Endothelial cell of umbilical vein (primary cell): ENCODE measurements at regions of chr19 and their contacts with region 1.

Region 1: DNA sequence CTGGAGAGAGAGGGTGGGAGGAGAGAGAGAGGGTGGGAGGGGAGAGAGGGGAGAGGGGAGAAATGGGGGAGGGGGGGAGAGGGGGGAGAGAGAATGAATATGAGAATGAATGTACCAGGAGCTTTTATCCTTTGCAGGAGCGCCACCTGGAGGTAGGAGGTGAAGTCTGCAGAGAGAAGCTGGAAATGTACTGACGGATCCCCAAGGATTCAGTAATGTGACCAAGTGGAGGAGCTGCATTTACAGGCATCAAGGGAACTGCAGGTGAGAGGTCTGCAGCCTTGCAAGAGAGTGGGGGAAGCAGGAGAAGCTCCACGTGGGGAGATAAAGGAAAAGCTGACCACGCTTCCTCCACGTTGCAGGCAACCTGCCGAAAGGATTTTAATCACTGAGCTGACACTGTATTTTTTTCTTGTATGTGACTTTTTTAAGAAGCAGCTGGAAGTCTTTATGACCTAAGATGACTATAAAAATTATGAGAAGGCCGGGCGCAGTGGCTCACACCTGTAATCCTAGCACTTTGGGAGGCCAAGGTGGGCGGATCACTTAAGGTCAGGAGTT is 33.7 kb downstream of the VSTM1 start:
- DNase-seq: peak; percentile 67
- H3K4me3 ChIP-seq: no peak overlapping the region
- H3K27ac ChIP-seq: no peak overlapping the region
- H3K4me1 ChIP-seq: peaks cover 4% of the 10 kb centered on the region
- H3K27me3 ChIP-seq: no peaks in the 10 kb centered on the region
- CTCF ChIP-seq: peak; percentile 61 to 72
- POLR2A ChIP-seq: no peak

Region 2: DNA sequence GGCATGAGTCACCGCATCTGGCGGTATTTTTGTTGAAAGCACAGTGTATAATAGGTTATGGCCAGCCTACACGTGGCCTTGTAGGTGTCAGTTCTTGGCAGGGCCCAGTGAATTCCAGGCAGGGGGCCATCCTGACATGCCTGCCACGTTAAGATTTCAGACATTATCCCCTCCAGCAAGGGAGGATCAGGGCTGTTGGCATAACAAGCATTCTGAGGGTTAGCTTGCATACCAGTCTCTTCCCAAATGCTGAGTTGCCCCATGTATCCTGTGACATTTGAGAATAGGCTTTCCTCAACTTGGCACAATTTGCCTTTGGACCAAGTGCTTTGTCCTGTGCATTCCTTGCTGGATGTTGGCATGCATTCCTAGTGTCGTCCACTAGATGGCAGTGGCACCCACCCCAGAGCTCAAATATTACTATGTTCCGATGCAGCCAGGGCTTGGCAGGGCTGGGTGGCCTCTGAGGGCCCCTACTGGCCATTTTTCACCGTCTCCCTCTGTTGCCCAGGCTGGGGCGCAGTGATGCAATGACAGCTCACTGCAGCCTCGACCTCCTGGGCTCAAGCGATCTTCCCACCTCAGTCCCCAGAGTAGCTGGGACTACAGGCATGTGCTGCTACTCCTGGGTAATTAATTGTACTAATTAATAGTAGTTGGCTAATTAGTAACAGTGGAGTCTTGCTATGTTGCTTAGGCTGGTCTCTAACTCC is 237.1 kb before region 1 on chr19:
- CTCF ChIA-PET with region 1: interaction called, 216 read pairs
- POLR2A ChIA-PET with region 1: no interaction called
- dilution Hi-C with region 1: no loop called
- intact Hi-C with region 1: loop called (anchors 1 kb)
- DNase-seq: peak; percentile 88
- H3K4me3 ChIP-seq: no peak overlapping the region
- H3K27ac ChIP-seq: no peak overlapping the region
- H3K4me1 ChIP-seq: no peaks in the 10 kb centered on the region
- H3K27me3 ChIP-seq: no peaks in the 10 kb centered on the region
- CTCF ChIP-seq: peak; percentile 99
- POLR2A ChIP-seq: no peak

Region 3: GRCh38 chr19:53849237-53849676 is 180.8 kb before region 1 on chr19:
- CTCF ChIA-PET with region 1: interaction called, 40 read pairs
- POLR2A ChIA-PET with region 1: no interaction called
- dilution Hi-C with region 1: no loop called
- intact Hi-C with region 1: no loop called
- DNase-seq: peak; percentile 90
- H3K4me3 ChIP-seq: peak overlapping the region in 1 of 3 experiments; percentile 48
- H3K27ac ChIP-seq: peak overlapping the region; percentile 95
- H3K4me1 ChIP-seq: peaks cover 11% of the 10 kb centered on the region
- H3K27me3 ChIP-seq: no peaks in the 10 kb centered on the region
- CTCF ChIP-seq: no peak
- POLR2A ChIP-seq: no peak

Region 4: GRCh38 chr19:53892981-53893325 is 137.1 kb before region 1 on chr19:
- CTCF ChIA-PET with region 1: interaction called, 15 read pairs
- POLR2A ChIA-PET with region 1: no interaction called
- dilution Hi-C with region 1: no loop called
- intact Hi-C with region 1: no loop called
- DNase-seq: no peak
- H3K4me3 ChIP-seq: no peak overlapping the region
- H3K27ac ChIP-seq: no peak overlapping the region
- H3K4me1 ChIP-seq: no peaks in the 10 kb centered on the region
- H3K27me3 ChIP-seq: peaks cover 3 to 9% of the 10 kb centered on the region in 2 experiments
- CTCF ChIP-seq: no peak
- POLR2A ChIP-seq: no peak

Region 5: GRCh38 chr19:53977991-53978731 is 51.8 kb before region 1 on chr19:
- CTCF ChIA-PET with region 1: interaction called, 11 read pairs
- POLR2A ChIA-PET with region 1: no interaction called
- dilution Hi-C with region 1: no loop called
- intact Hi-C with region 1: no loop called
- DNase-seq: peak; percentile 94
- H3K4me3 ChIP-seq: peak overlapping the region in 1 of 3 experiments; percentile 30
- H3K27ac ChIP-seq: no peak overlapping the region
- H3K4me1 ChIP-seq: peaks cover 19% of the 10 kb centered on the region
- H3K27me3 ChIP-seq: no peaks in the 10 kb centered on the region
- CTCF ChIP-seq: no peak
- POLR2A ChIP-seq: no peak

Region 6: GRCh38 chr19:54041969-54042606 is 12.1 kb after region 1 on chr19:
- CTCF ChIA-PET with region 1: interaction called, 44 read pairs
- POLR2A ChIA-PET with region 1: no interaction called
- dilution Hi-C with region 1: no loop called
- intact Hi-C with region 1: no loop called
- DNase-seq: no peak
- H3K4me3 ChIP-seq: no peak overlapping the region
- H3K27ac ChIP-seq: no peak overlapping the region
- H3K4me1 ChIP-seq: peaks cover 7% of the 10 kb centered on the region
- H3K27me3 ChIP-seq: peaks cover 11 to 25% of the 10 kb centered on the region in 2 experiments
- CTCF ChIP-seq: no peak
- POLR2A ChIP-seq: no peak

Region 7: DNA sequence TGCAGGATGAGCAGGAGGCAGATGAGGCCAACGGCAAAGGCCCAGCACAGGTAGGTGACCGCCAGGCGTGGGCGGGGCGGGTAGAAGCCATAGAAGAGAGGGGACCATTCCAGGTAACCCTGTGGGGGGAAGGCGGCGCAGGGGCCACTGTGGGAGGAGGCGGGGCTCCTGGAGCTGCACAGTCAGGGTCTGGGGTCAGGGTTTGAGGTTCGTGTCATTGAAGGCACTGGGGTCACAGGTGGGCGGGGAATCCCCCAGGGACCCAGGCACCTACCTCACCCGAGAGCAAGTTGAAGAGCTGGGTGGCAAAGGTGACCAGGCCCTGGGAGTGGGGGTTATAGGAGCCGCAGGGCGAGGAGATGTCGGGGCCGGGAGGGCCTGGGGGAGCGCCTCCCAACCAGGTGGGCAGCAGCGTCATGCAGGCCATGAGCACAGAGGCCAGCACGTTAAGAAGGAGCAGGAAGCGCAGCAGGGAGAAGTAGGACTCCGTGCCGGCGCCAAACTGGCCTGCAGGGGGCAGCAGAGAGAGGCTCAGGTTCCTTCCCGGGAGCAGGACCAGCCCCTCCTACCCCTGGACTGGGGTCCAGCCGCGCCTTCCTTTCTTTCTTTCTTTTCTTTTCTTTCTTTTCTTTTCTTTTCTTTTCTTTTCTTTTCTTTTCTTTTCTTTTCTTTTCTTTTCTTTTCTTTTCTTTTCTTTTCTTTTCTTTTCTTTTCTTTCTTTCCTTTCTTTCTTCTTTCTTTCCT is 138.3 kb after region 1 on chr19:
- CTCF ChIA-PET with region 1: no interaction called
- POLR2A ChIA-PET with region 1: no interaction called
- dilution Hi-C with region 1: no loop called
- intact Hi-C with region 1: no loop called
- DNase-seq: peak; percentile 82
- H3K4me3 ChIP-seq: no peak overlapping the region
- H3K27ac ChIP-seq: no peak overlapping the region
- H3K4me1 ChIP-seq: no peaks in the 10 kb centered on the region
- H3K27me3 ChIP-seq: peaks cover 0 to 8% of the 10 kb centered on the region in 2 experiments
- CTCF ChIP-seq: peak; percentile 82 to 96
- POLR2A ChIP-seq: no peak